ENCODE measurements at regions of chr16 and their contacts with region 1.

Region 1: GRCh38 chr16:88552166-88552565 is 18.0 kb upstream of the ZC3H18 start:
- DNase-seq: peak; percentile 3
- H3K4me3 ChIP-seq: peak overlapping the region; percentile 6
- H3K27ac ChIP-seq: peak overlapping the region; percentile 86
- H3K4me1 ChIP-seq: peaks cover 71% of the 10 kb centered on the region
- CTCF ChIP-seq: no peak

Region 2: DNA sequence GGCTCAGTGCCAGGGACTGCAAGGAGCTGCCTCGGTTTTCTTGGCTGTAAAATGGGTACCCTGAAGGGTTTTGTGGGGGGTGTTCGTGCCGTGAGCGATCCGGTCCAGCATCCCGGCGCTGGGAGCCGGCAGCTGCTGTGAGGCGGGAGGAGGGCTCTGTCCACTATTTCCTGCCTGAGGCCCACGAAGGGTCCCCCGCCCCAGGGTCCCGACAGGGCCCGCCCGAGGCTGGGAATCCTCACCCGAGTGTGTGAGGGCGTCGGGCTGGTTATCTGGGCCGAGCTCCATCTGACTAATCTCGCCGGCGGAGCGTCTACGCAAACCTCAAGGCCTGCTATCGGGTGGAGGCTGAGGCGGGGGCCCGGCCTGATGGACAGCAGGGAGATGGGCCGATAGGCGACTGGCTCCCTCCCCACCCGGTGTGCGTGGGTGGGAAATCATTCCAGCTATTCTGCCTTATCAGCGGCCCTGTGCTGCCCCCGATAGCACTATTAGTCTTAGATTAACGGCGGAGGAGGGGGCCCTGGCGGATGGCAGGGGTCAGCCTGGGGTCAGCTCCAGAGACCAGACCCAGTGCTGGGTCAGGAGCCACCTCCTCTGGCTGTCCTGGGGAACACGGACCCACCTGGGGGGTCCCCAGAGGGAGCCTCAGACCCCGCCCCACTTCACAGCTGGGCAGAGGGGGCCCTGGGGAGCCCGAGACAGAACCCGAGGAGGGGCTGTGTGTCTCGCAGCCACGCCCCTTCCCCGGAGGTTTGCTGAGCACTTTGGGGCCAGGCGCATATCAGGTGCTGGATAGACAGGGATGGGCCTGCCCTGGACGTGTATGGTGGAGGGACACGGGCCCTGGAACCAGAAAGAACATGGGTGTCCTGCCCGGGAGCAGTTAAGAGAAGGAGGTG is 54.4 kb before region 1 on chr16:
- CTCF ChIA-PET with region 1: interaction called, 22 read pairs
- POLR2A ChIA-PET with region 1: no interaction called
- intact Hi-C with region 1: no loop called
- DNase-seq: no peak
- H3K4me3 ChIP-seq: no peak overlapping the region
- H3K27ac ChIP-seq: no peak overlapping the region
- H3K4me1 ChIP-seq: no peaks in the 10 kb centered on the region
- CTCF ChIP-seq: no peak